ENCODE measurements at regions of chr17 and their contacts with region 1.

Region 1: GRCh38 chr17:21126645-21127510 is at the start of gene DHRS7B:
- DNase-seq: peak; percentile 98 to 99
- H3K4me3 ChIP-seq: peak within 1 kb of the TSS; percentile 76 to 81 (median 81)
- H3K27ac ChIP-seq: peak within 1 kb of the TSS; percentile 95 to 99 (median 96)
- H3K4me1 ChIP-seq: peaks cover 11 to 35% (median 27%) of the 10 kb centered on the region in 4 donors
- H3K27me3 ChIP-seq: no peaks in the 10 kb centered on the region
- CTCF ChIP-seq: no peak
- EP300 ChIP-seq: no peak
- POLR2A ChIP-seq: peak in 2 of 4 donors; percentile 52 to 65
- total RNA-seq, gene DHRS7B: 5.8 to 32.9 (median 19.5) TPM in 4 of 5 donors, not detected in the other

Region 2: DNA sequence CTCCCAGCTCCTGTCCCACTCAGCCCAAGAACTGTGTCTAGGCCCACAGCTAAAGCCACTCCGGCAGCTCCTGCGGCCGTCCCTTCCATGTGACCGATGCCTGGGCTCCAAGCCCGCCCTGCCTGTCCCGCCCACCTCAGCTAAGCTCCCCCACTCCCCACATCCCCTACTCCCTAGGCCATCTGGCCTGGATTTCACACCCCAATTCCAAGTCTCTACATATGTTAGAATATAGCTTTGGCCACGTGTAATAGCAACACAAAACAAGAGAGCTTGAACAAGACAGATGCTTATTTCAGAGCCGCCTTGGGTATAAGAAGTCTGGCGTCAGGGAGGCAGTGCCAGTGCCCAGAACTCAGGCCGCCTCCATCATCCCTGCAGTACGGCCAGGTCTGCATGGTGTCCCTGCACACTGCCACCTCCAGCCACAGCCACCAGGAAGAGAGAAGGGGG is 54.1 kb before region 1 on chr17:
- intact Hi-C with region 1: no loop called
- DNase-seq: peak in 1 of 2 donors; percentile 79
- H3K4me3 ChIP-seq: no peak overlapping the region
- H3K27ac ChIP-seq: no peak overlapping the region
- H3K4me1 ChIP-seq: peaks cover 0 to 21% (median 2%) of the 10 kb centered on the region in 4 donors
- H3K27me3 ChIP-seq: no peaks in the 10 kb centered on the region
- CTCF ChIP-seq: no peak
- EP300 ChIP-seq: no peak
- POLR2A ChIP-seq: no peak

Region 3: DNA sequence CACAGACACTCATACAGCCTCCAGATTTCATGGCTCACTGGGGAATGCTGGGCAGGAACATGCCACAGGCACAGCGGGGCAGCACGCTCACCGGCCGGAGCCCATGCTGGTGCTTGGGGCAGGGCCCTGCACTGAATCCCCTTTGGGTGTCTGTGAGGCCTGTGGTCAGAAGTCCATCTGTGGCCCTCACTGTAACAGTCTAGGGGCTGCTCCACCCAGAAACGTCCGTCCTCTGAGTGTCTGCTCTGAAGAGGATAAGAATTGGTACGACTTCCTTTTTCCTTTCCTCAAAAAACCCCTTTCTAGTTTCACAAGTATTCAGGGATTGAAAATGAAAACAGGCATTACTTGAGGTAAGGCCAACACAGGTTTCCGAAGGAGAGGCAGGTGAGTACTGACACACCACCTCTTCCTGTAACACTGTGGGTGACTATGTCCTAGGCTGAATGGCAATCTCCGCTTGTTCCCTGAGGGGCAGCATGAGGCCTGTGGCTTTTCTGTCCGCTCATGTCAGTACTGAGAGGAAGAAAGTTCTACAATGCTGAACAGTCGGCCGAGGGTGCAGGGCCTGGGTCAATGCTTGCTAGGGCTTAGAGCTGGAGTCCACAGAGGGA is 44.5 kb after region 1 on chr17:
- intact Hi-C with region 1: no loop called
- DNase-seq: no peak
- H3K4me3 ChIP-seq: no peak overlapping the region
- H3K27ac ChIP-seq: peak overlapping the region in 2 of 5 donors; percentile 18 to 63
- H3K4me1 ChIP-seq: peaks cover 6 to 48% (median 17%) of the 10 kb centered on the region in 4 donors
- H3K27me3 ChIP-seq: no peaks in the 10 kb centered on the region
- CTCF ChIP-seq: no peak
- EP300 ChIP-seq: no peak
- POLR2A ChIP-seq: no peak

Region 4: GRCh38 chr17:21214015-21214776 is 87.3 kb after region 1 on chr17 and contains the start of gene TMEM11:
- intact Hi-C with region 1: loop called (anchors 10 kb)
- DNase-seq: peak; percentile 96 to 99
- H3K4me3 ChIP-seq: peak within 1 kb of the TSS; percentile 94 to 100 (median 99)
- H3K27ac ChIP-seq: peak within 1 kb of the TSS; percentile 84 to 98 (median 94)
- H3K4me1 ChIP-seq: peaks cover 43 to 80% (median 67%) of the 10 kb centered on the region in 4 donors
- H3K27me3 ChIP-seq: no peaks in the 10 kb centered on the region
- CTCF ChIP-seq: no peak
- EP300 ChIP-seq: no peak
- POLR2A ChIP-seq: peak in 2 of 4 donors; percentile 20 to 61
- total RNA-seq, gene TMEM11: 0.87 to 17.7 (median 2.3) TPM

Region 5: GRCh38 chr17:21275579-21276263 is 148.8 kb after region 1 on chr17:
- intact Hi-C with region 1: loop called (anchors 10 kb)
- DNase-seq: peak; percentile 95 to 97
- H3K4me3 ChIP-seq: peak overlapping the region; percentile 64 to 73 (median 68)
- H3K27ac ChIP-seq: peak overlapping the region; percentile 52 to 82 (median 70)
- H3K4me1 ChIP-seq: peaks cover 27 to 49% (median 43%) of the 10 kb centered on the region in 4 donors
- H3K27me3 ChIP-seq: no peaks in the 10 kb centered on the region
- CTCF ChIP-seq: no peak
- EP300 ChIP-seq: no peak
- POLR2A ChIP-seq: no peak

Measured in stomach (tissue), 19 donors.